Left cardiac atrium (tissue), 4 donors: ENCODE measurements at regions of chr17 and their contacts with region 1.

Region 1: DNA sequence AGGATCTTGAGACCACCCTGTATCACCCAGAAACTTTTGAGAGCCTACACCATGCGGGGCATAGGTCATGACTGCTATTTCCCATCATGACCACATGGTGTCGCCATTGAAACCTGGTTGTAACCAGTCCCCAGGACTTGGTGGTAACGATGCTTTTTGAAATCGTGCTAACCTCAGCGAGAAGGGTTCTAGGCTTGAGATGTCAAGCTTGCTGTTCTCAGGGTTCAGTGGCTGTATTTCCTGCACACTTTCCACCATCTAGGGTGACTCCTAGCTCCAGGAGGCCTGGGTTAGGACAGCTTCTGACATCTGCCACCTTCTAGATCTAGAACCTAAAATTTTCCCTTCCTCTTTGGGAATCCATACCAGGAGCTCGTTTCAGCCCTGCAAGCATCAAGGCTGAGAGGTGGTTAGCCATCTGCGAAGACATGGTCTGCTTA is 13.0 kb upstream of the SPNS3 start:
- DNase-seq: peak; percentile 38
- ATAC-seq: peak; percentile 89 to 94

Region 2: DNA sequence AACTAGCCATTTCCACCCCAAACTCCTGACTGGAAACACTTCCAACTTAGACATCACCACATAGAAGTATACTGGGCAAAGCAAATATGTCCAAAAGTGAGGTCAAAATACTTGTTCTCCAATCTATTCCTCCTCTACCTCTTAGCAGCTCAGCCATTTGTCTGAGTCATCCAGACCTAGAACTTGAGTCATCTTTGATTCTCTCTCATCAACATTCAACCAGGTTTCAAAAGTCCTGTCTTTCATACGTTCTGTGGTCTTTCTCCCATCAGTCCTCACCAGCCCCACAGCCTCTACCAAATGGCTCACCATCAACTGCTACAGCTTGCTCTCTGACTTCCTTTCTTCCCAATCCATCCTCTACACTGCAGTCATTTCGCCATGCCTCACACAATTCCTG is 163.8 kb before region 1 on chr17:
- intact Hi-C with region 1: no loop called
- DNase-seq: no peak
- ATAC-seq: no peak

Region 3: DNA sequence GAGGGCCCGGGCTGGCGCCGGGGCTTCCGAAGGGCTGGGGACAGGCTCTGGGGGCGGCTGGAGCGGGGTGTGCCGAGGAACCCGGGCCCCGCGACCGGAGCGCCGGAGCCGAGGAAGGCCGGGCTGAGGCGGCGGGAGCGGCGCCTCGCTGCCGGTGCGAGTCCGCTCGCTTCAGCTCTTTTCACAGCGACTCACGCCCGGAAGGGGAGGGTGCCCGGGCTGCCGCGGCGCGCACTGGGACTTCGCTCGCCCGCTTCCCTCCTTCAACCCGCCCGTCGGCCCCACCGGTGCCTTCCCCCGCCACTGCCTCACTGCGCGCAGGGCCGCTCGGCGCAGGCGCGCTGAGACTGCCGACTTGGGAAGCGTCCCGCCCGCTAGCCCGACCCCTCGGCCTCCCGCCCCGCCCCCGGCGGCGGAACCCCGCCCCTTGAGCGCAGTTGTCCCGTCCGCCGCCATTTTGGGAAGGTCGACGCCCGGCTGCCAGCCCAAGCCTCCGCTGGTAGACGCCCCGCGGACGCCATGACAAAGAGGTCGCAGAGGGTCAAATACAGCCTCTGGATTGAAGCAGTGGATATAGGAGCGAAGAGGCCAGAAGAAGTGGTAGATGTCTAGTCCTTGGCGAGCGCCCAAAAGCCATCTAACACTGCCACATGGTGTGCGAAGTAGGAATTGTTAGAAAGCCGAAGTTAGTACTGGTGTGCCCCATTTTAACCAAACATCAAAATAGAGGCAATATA is 54.2 kb before region 1 on chr17 and contains the start of gene UBE2G1:
- intact Hi-C with region 1: no loop called
- DNase-seq: peak; percentile 98
- ATAC-seq: peak; percentile 94 to 95
- total RNA-seq, gene UBE2G1: 52.7 to 53.4 TPM

Region 4: DNA sequence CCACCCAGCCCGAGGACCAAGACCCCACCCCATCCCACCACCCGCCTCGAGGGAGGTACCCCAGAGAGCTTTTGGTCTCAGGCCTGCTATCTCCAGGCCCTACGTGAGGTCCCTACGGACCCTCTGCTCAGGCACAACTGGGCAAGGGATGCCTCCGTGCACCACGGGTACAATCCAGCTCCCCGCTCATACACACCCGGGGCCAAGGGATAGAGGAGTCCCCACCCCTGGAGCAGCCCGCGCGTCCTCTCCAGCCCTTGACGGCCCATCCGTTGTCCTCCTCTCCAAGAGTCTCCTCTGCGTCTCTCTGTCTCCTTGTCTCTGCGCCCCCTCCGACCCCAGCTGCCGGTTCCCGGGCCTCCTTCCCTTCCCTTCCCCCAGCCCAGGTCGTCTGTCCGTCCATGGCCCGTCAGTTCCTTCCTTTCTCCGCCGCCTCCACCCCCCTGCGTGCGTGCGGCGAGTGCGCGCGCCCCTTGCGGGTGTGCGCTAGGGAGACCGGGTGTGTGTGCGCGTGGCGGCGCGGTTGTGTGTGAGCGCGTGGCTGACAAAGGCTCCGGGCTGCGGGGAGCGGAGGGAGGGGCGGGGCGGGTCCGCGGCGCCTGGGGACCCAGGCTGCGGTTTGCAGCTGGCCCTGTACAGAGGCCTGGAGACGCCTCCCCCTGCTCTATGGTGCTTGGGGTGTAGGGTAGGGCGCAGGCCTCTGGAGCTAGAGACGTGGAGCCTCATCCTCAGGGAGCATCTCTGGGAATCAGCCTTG is 78.9 kb after region 1 on chr17:
- intact Hi-C with region 1: loop called in 1 of 2 experiments (anchors 10 kb)
- DNase-seq: no peak
- ATAC-seq: peak; percentile 17 to 32

Region 5: DNA sequence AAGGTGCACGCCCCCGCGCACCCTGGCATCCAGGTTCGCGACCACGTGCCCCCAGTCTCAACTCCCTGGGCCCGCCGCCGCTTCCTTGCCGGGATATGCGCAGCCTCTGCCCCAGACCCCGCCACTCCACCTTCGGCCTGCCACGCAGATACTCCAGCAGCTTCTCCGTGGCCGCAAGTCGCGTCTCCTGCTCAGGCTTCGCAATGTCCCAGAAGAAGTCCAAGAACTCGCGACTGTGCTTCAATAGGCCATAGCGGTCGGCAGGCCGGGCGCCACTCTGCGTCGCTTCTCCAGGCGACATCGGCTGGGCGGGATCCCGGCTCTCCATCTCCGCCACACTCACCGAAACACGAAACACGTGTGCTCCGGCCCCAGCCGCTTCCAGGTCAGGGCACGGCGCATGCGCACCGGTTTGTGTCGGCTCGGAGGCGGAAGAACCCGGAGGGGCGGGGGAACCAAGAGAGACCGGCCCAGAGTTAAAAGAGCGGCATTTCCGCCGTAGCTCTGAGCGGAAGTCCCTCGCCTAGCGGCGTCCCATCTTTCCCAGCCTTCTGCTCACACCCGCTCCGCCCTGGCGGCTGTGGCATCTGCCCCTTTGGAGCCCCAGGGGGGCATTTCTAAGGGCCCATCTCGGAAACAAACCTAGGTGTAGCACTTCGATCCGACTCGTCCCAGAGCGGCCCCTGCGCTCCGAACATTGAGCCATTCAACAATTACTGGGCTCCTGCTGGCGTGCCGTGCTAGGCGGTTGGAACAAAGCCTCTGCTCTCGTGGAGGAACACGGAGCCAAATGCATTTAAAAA is 134.5 kb after region 1 on chr17 and contains the start of gene MYBBP1A:
- intact Hi-C with region 1: loop called in 1 of 2 experiments (anchors 10 kb)
- DNase-seq: peak; percentile 99
- ATAC-seq: peak; percentile 95 to 98
- total RNA-seq, gene MYBBP1A: 17.6 to 34.9 TPM

Region 6: GRCh38 chr17:4625181-4625617 is 204.5 kb after region 1 on chr17:
- intact Hi-C with region 1: loop called (anchors 5 to 10 kb)
- DNase-seq: no peak
- ATAC-seq: peak; percentile 48 to 53